ENCODE measurements at regions of chr3 and their contacts with region 1.

Region 1: DNA sequence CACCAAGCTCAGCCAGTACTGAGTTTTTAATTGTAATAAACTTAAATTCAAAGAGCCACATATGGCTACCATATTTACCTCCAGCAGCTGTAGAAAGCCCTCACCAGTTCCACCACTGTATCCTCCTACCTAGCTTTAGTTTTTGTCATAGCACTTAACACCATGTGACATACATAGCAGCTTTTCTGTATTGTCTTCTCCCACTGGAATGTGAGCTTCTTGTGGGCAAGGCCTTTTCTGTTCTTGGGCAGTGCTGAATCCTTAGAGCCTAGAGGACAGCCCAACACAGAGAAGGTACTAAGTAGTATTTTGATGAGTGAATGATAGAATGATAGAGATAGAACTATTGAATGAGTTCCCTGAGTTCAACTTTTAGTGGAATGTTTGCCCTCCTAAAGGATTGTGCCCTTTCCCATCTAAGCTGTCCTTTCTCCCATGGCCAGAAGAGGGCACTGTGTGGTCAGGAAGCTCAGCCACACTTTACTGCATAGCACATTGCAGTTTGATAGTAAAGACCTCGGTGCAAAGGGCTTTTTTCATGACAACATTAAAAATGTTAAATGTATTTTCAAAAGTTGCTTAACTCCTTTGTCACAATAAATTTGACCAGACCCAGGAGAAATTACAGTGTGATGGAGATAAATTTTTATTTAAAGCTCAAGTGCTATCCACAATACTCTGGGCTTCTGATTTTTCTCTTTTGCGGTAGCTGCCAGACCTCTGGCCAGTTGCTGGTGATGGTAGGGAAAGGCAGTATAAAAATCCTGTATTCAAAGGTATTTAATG is 115.8 kb downstream of the GHSR start:
- DNase-seq: peak; percentile 71
- H3K4me3 ChIP-seq: no peak overlapping the region
- H3K27ac ChIP-seq: no peak overlapping the region
- H3K4me1 ChIP-seq: peaks cover 4% of the 10 kb centered on the region
- H3K27me3 ChIP-seq: no peaks in the 10 kb centered on the region
- CTCF ChIP-seq: peak; percentile 90

Region 2: DNA sequence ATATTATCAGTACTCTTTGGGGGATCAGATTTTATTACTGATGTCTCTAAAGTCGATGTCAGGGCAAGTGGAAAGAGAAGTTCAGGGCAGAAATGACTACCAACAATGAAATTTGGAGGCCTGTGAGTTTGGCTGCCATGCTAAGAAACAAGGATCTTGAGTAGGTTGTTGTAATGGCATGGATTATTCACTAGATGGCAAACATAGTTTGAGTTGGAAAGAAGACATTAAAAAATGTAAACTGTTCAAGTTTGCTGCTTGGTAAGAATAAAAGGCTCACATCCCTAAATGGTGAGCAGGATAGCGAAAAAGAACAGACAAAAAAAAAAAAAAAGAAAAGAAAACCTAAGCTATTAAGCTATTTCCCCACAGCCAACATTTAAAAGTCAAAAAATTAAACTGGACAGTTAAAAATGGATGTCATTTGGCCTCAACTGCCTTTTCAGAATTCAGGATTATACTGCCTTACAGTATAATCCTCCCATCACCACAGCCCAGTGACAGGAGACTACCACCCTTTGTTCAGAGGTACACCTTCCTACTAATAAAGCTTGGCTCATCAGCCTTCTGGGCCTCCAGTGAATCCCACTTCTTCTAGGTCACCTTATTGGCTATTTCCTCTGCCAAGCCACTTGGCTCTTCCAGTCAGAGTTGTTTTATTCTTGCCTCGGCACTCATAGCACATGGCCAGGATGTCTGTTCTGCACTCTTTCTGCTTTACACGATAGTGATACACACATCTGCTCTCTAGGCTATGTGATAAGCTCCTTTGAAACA is 685.9 kb before region 1 on chr3:
- CTCF ChIA-PET with region 1: no interaction called
- POLR2A ChIA-PET with region 1: no interaction called
- intact Hi-C with region 1: loop called (anchors 5 kb)
- DNase-seq: peak; percentile 61
- H3K4me3 ChIP-seq: no peak overlapping the region
- H3K27ac ChIP-seq: no peak overlapping the region
- H3K4me1 ChIP-seq: no peaks in the 10 kb centered on the region
- H3K27me3 ChIP-seq: no peaks in the 10 kb centered on the region
- CTCF ChIP-seq: peak; percentile 61

Region 3: DNA sequence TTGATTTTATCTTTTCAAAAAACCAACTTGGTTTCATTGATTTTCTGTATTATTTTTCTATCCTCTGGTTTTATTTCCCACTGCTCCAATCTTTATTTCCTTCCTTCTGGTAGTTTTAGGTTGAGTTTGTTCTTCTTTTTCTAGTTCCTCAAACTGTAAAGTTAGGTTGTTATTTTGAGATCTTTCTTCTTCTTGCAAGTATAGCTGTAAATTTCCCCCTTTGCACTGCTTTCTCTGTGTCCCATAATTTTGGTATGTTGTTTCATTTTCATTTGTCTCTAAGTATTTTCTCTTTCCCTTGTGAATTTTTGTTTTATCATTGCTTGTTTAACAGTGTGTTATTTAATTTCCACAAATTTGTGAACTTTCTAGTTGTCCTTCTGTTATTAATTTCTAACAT is 642.2 kb before region 1 on chr3:
- CTCF ChIA-PET with region 1: no interaction called
- POLR2A ChIA-PET with region 1: no interaction called
- intact Hi-C with region 1: no loop called
- DNase-seq: no peak
- H3K4me3 ChIP-seq: no peak overlapping the region
- H3K27ac ChIP-seq: no peak overlapping the region
- H3K4me1 ChIP-seq: no peaks in the 10 kb centered on the region
- H3K27me3 ChIP-seq: no peaks in the 10 kb centered on the region
- CTCF ChIP-seq: no peak

Region 4: GRCh38 chr3:172039436-172040077 is 292.9 kb before region 1 on chr3 and contains the start of gene FNDC3B:
- CTCF ChIA-PET with region 1: interaction called, 3 read pairs
- POLR2A ChIA-PET with region 1: no interaction called
- intact Hi-C with region 1: loop called (anchors 5 kb)
- DNase-seq: peak; percentile 97
- H3K4me3 ChIP-seq: peak within 1 kb of the TSS; percentile 97
- H3K27ac ChIP-seq: peak within 1 kb of the TSS; percentile 93
- H3K4me1 ChIP-seq: peaks cover 18% of the 10 kb centered on the region
- H3K27me3 ChIP-seq: no peaks in the 10 kb centered on the region
- CTCF ChIP-seq: no peak
- total RNA-seq, gene FNDC3B: 43.2 and 50.8 TPM in 2 replicates

Region 5: DNA sequence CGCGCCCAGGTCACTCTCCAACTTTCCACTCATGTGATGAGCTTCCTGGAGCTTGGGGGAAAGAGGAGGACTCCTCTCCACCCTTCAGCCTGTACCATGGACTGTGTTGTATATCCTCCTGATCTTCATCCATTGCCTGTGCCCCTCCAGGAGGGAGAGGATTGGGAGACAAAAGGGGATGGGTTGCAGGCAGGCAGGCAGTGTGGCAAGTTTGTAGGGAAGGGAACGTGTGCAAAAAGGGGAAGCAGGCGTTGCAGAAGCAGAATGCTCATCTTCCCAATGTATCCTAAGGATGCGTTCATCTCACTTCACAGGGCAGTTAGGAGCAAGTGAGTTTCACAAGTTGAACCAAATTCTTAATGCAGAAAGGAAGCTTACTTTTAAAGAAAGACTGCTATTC is 143.9 kb after region 1 on chr3:
- CTCF ChIA-PET with region 1: interaction called, 9 read pairs
- POLR2A ChIA-PET with region 1: no interaction called
- intact Hi-C with region 1: loop called (anchors 5 kb)
- DNase-seq: no peak
- H3K4me3 ChIP-seq: peak overlapping the region; percentile 48
- H3K27ac ChIP-seq: no peak overlapping the region
- H3K4me1 ChIP-seq: no peaks in the 10 kb centered on the region
- H3K27me3 ChIP-seq: no peaks in the 10 kb centered on the region
- CTCF ChIP-seq: no peak

Region 6: DNA sequence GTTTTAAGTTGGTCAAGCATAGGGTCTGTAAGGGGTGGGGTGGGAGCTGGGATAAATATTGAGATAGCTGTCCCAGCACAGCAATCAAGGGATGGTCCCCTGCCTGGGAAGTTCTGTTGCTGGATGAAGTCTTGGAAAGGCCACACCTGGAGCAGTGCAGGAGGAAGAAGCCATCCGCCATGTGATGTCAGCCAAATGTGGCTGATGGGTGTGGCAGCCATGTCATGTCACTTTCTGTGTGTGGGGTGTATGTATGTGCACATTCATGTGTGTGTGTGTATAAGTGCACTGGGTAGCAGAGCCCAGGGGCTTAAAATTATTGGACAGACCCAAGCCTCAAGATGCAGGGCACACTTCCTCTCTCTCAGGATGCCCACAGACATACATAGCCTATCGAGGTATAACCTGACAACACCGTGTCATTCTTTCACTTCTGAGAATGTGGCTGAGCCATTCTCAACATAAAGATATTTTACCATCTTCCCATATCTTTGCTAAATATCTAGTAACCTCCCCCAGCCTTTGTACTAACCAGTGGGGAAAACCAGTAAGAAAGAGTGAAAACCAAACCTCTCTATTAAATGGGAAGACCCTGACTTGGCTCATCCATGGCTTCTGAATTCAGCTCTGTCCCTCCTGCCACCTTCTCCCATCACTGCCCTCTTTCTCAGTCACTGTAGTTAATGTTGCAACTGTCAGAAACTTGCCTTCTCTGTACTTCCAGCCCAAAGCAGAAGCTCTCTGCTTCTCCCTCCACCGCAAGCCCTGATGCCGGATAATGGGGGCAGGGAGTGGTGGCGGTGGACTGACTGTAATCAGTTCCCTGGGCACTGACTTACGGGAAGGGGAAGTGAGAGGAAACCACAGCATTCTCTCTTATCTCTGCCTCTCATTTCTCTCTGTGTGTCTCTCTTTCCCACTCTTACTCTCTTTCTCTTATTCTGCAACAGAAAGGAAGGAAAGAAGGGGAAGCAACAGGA is 179.6 kb after region 1 on chr3:
- CTCF ChIA-PET with region 1: no interaction called
- POLR2A ChIA-PET with region 1: no interaction called
- intact Hi-C with region 1: no loop called
- DNase-seq: no peak
- H3K4me3 ChIP-seq: no peak overlapping the region
- H3K27ac ChIP-seq: no peak overlapping the region
- H3K4me1 ChIP-seq: no peaks in the 10 kb centered on the region
- H3K27me3 ChIP-seq: no peaks in the 10 kb centered on the region
- CTCF ChIP-seq: no peak

Region 7: DNA sequence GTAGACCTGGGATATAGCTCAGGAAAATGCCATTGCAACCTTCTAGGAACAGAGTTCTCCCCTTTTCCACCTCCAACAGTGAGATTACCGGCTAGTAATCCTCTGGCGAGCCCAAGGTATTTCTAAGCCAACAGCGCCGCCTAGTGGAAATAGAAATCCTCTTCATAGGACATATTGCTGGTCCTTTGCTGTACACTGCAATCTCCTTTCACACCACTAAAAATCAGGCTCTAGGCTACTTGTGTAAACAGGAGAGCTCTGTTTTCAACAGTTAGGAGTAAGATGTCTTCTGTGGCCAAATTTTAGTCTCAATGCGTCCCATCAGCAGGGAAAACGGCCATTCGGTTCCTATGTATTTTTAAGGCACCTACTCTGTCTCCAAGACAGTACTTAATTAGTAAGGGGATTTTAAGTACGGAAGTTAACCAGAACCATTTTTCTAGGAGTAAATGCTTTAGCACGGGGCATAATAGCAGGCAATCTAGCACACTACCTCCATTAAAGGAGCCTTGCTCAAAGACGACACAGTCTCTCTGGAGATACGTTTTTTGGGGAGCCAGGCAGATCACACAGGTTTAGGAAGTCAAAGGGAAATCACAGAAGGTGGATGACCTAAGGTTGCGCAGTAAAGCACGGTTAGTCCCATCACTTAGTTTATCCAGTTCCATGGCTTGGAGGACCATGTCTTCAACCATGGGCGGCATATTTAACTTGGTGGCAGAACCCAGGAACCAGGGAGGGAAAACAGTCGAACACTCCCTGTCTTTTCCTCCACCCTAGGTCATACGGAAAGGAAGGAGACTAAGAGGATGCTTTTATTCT is 334.6 kb after region 1 on chr3:
- CTCF ChIA-PET with region 1: interaction called, 17 read pairs
- POLR2A ChIA-PET with region 1: no interaction called
- intact Hi-C with region 1: loop called (anchors 5 kb)
- DNase-seq: peak; percentile 88
- H3K4me3 ChIP-seq: no peak overlapping the region
- H3K27ac ChIP-seq: no peak overlapping the region
- H3K4me1 ChIP-seq: no peaks in the 10 kb centered on the region
- H3K27me3 ChIP-seq: no peaks in the 10 kb centered on the region
- CTCF ChIP-seq: peak; percentile 86

Region 8: DNA sequence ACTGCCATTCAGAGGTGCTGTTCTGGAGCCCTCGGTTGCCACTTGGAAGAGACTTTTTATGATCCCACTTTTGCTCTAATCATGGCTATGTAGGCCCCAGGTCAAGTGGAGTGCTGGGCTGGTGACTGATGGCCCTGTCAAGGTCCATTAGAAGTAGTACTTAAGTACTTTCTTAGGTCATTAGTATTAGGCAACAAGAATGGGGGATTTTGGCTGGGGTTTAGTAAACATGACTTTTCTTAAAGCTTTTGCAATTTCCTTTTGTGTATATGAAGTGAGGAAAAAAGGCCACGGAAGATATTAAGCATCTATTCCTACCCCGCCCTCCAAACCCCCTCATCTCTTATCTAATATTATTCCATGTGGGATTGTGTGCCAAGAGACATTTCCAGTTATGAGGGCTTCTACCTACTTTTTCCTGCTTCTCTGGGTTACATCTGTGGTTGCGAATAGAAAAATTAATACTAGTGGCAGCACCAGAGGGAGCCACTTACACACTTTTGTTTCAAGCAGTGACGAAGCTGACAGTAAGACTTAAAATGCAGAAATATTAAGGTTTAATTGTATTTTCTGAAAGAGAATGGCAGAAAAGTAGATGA is 1079.0 kb after region 1 on chr3:
- CTCF ChIA-PET with region 1: no interaction called
- POLR2A ChIA-PET with region 1: no interaction called
- intact Hi-C with region 1: no loop called
- DNase-seq: peak; percentile 52
- H3K4me3 ChIP-seq: no peak overlapping the region
- H3K27ac ChIP-seq: no peak overlapping the region
- H3K4me1 ChIP-seq: no peaks in the 10 kb centered on the region
- H3K27me3 ChIP-seq: no peaks in the 10 kb centered on the region
- CTCF ChIP-seq: peak; percentile 66

Measured in A673 (cell line).